Activated CD4-positive, alpha-beta T cell treated with anti-CD3 and anti-CD28 coated beads, Interleukin-2, amount 10 ng/mL, durations not matched to agents 7 days and 5 days (primary cell): ENCODE measurements at regions of chr15 and their contacts with region 1.

Region 1: DNA sequence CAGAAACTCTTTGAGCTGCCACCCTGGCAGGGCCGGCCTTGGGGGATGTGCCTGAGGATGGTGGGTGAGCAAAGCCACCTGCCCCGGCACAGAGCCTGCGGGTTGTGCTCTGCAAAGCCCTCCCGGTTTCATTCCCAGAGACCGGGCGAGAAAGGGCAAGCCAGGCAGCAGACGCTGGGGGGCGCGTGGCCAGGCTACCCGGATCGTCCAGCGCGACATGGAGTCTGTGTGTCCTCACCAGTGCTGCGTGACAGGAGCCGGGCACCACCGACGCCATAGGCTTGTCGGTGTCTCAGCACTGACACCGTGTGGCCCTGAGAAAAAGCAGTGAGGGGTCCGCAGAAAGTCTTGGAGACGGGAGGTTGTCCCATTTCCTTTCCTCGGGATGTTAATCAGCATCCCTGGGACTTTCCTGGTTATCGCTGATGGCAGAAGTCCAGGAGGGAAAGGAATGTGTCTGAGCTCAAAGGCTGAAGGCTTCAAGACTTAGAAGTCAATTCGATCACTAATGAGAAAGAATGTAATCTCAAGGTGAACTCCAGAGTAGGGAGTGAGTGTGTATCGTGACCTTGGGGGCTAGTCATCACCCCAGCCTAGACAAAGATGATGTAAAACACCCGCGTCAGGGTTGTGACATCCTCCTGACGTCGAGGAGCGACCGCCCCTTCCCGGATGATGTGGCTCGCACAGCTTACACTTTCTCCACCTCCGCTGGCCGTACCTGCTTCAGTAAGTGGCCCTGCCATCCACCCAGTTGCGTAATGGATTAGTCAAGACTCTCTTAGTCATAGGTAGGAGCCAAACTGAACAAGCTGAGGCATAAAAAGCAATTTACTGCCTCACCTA is 36.3 kb upstream of the PLA2G4E start:
- DNase-seq: peak; percentile 47
- H3K4me3 Mint-ChIP-seq: peak overlapping the region; percentile 13
- H3K27ac Mint-ChIP-seq: no peak overlapping the region
- H3K4me1 Mint-ChIP-seq: peaks cover 8% of the 10 kb centered on the region
- H3K27me3 Mint-ChIP-seq: peaks cover 40% of the 10 kb centered on the region

Region 2: DNA sequence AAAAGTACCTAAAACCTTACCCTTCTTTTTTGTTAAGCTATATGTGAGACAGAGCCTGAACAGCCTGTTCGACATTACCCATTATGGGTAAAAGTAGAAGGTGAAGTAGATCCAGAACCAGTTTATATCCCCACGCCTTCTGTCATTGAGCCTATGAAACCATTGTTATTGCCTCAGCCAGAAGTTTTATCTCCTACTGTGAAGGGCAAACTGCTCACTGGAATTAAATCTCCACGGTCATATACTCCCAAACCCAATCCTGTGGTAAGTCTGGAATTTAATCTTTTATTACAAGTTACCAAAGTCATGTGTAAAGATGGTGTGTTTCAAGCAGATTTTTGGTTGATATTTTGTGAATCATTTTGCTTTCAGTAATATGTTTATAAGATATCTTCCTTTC is 330.0 kb before region 1 on chr15:
- CTCF ChIA-PET with region 1: no interaction called
- POLR2A ChIA-PET with region 1: no interaction called
- DNase-seq: no peak
- H3K4me3 Mint-ChIP-seq: no peak overlapping the region
- H3K27ac Mint-ChIP-seq: no peak overlapping the region
- H3K4me1 Mint-ChIP-seq: no peaks in the 10 kb centered on the region
- H3K27me3 Mint-ChIP-seq: no peaks in the 10 kb centered on the region

Region 3: GRCh38 chr15:41989259-41989933 is 67.8 kb before region 1 on chr15:
- CTCF ChIA-PET with region 1: interaction called, 20 read pairs
- POLR2A ChIA-PET with region 1: no interaction called
- DNase-seq: peak; percentile 83
- H3K4me3 Mint-ChIP-seq: no peak overlapping the region
- H3K27ac Mint-ChIP-seq: no peak overlapping the region
- H3K4me1 Mint-ChIP-seq: no peaks in the 10 kb centered on the region
- H3K27me3 Mint-ChIP-seq: no peaks in the 10 kb centered on the region